ENCODE measurements at regions of chr6 and their contacts with region 1.

Region 1: GRCh38 chr6:130020907-130021629 is 2.7 kb downstream of the L3MBTL3 start:
- DNase-seq: peak; percentile 93
- H3K4me3 ChIP-seq: peak overlapping the region; percentile 80 to 87 (median 84)
- H3K27ac ChIP-seq: peak overlapping the region; percentile 79
- H3K4me1 ChIP-seq: peaks cover 17% of the 10 kb centered on the region
- H3K27me3 ChIP-seq: no peaks in the 10 kb centered on the region
- CTCF ChIP-seq: peak; percentile 80 to 82
- POLR2A ChIP-seq: no peak

Region 2: DNA sequence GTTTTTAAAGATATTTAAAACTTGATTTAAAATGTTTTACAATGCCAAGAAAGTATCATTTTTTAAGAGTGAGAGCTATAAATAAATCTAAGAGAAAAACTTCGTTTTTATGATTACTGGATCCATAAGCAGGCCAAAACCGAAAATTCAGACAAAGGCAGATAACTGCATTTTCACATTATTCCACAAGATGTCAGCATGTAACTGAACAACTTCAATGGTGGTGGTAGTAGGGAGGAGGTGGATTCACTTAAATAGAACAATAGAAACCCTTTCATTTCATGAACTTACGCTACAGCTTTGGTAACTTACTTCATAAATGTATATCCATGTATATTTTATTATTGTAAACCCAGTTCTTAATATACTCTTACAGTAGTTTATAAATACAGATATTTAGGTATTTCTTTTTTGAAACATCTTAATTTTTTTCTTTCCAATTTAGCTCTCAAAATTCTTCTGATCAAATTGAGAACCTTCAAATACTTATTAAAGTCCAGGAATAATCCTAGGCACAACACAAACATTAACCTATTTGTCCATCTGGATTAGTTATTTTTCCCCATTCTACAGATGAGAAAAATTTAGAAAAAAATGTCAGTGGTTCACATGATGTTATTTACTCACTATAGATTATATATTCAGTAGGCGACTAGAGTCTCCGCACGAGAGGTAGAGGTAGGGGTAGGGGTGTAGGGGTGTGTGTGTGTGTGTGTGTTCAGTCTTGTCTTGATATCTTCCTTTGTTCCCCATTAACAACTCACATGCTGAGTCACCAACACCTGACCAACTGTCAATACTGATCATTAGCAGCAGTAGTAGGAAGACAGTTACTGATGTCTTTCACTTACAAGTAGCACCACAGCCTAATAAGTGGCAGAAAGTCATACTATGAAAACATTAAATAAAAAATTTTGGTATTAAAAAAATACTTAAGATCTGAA is 422.6 kb before region 1 on chr6:
- CTCF ChIA-PET with region 1: interaction called, 35 read pairs
- POLR2A ChIA-PET with region 1: no interaction called
- dilution Hi-C with region 1: no loop called
- intact Hi-C with region 1: loop called (anchors 1 kb)
- DNase-seq: peak; percentile 87
- H3K4me3 ChIP-seq: no peak overlapping the region
- H3K27ac ChIP-seq: peak overlapping the region; percentile 32
- H3K4me1 ChIP-seq: peaks cover 5% of the 10 kb centered on the region
- H3K27me3 ChIP-seq: no peaks in the 10 kb centered on the region
- CTCF ChIP-seq: peak; percentile 41 to 47
- POLR2A ChIP-seq: peak; percentile 19

Region 3: GRCh38 chr6:129672881-129673643 is 348.0 kb before region 1 on chr6:
- CTCF ChIA-PET with region 1: interaction called, 4 read pairs
- POLR2A ChIA-PET with region 1: no interaction called
- dilution Hi-C with region 1: no loop called
- intact Hi-C with region 1: loop called (anchors 2 kb)
- DNase-seq: peak; percentile 88
- H3K4me3 ChIP-seq: peak overlapping the region in 1 of 3 experiments; percentile 58
- H3K27ac ChIP-seq: peak overlapping the region; percentile 93
- H3K4me1 ChIP-seq: peaks cover 72% of the 10 kb centered on the region
- H3K27me3 ChIP-seq: no peaks in the 10 kb centered on the region
- CTCF ChIP-seq: no peak
- POLR2A ChIP-seq: no peak

Region 4: GRCh38 chr6:129730477-129731165 is 290.4 kb before region 1 on chr6:
- CTCF ChIA-PET with region 1: interaction called, 14 read pairs
- POLR2A ChIA-PET with region 1: no interaction called
- dilution Hi-C with region 1: no loop called
- intact Hi-C with region 1: no loop called
- DNase-seq: peak; percentile 63
- H3K4me3 ChIP-seq: no peak overlapping the region
- H3K27ac ChIP-seq: no peak overlapping the region
- H3K4me1 ChIP-seq: peaks cover 7% of the 10 kb centered on the region
- H3K27me3 ChIP-seq: no peaks in the 10 kb centered on the region
- CTCF ChIP-seq: peak; percentile 29 to 40
- POLR2A ChIP-seq: no peak

Region 5: GRCh38 chr6:129774697-129775447 is 246.2 kb before region 1 on chr6:
- CTCF ChIA-PET with region 1: interaction called, 17 read pairs
- POLR2A ChIA-PET with region 1: interaction called, 4 read pairs
- dilution Hi-C with region 1: no loop called
- intact Hi-C with region 1: loop called (anchors 1 kb)
- DNase-seq: peak; percentile 76
- H3K4me3 ChIP-seq: no peak overlapping the region
- H3K27ac ChIP-seq: no peak overlapping the region
- H3K4me1 ChIP-seq: no peaks in the 10 kb centered on the region
- H3K27me3 ChIP-seq: no peaks in the 10 kb centered on the region
- CTCF ChIP-seq: peak; percentile 91 to 96
- POLR2A ChIP-seq: no peak

Region 6: DNA sequence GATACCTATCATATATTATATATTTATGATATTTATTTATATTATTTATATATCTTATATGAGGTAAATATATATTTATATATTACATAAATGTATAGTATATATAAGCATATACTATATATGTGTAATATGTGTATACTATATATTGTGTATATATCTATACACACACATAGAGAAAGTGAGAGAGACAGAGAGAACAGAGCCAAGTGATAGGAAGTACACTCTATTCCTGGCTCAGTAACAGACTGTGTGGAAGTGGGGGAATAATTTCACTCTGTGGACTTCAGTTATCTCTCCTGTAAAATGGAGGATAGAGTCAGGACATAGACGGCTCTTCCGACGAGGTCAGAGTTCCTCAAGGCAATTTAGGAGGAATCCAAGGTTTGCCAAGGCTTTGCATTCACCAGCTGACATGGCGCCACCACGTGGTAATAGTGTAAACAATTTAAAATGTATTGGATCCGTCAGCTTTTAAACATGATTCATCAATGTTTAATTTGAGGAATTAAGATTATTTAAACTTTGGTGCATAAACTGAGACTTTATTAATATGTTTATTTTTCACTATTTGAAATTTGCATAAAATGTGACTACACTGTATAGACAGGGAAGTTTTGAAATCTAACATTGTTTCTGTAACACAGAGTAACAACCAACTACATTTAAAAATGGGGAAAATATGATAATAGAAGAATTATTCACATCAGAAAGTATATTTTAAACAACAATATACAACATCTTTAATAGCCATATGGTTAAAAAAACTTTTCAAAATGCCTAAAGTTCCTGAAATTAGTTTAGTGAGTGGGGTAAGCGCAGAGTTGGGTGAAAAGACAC is 84.5 kb before region 1 on chr6:
- CTCF ChIA-PET with region 1: interaction called, 6 read pairs
- POLR2A ChIA-PET with region 1: no interaction called
- dilution Hi-C with region 1: no loop called
- intact Hi-C with region 1: loop called (anchors 1 kb)
- DNase-seq: peak; percentile 73
- H3K4me3 ChIP-seq: peak overlapping the region in 1 of 3 experiments; percentile 30
- H3K27ac ChIP-seq: no peak overlapping the region
- H3K4me1 ChIP-seq: peaks cover 2% of the 10 kb centered on the region
- H3K27me3 ChIP-seq: no peaks in the 10 kb centered on the region
- CTCF ChIP-seq: peak; percentile 39 to 56
- POLR2A ChIP-seq: no peak

Region 7: DNA sequence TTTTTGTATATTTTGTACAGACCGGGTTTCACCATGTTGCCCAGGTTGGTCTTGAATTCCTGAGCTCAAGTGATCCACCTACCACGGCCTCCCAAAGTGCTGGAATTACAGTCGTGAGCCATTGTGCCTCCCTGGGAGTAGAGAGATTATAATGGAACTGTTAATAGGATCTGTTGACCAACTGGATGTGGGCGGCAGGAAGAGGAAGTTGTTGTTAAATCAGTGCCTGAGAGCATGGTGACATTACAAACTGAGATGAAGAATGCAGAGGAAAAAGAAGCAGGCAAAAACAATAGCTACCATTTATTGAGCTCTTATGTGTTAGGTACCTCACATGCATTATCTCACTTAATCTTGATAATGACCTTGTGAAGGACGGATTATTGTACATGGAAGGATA is 11.9 kb before region 1 on chr6:
- CTCF ChIA-PET with region 1: interaction called, 12 read pairs
- POLR2A ChIA-PET with region 1: no interaction called
- dilution Hi-C with region 1: no loop called
- intact Hi-C with region 1: loop called (anchors 1 kb)
- DNase-seq: peak; percentile 46
- H3K4me3 ChIP-seq: no peak overlapping the region
- H3K27ac ChIP-seq: peak overlapping the region; percentile 94
- H3K4me1 ChIP-seq: peaks cover 28% of the 10 kb centered on the region
- H3K27me3 ChIP-seq: no peaks in the 10 kb centered on the region
- CTCF ChIP-seq: no peak
- POLR2A ChIP-seq: peak; percentile 10

Measured in endothelial cell of umbilical vein (primary cell).